PC-3 (cell line): ENCODE measurements at regions of chr13 and their contacts with region 1.

Region 1: GRCh38 chr13:42532561-42533335 is 41.2 kb upstream of the TNFSF11 start:
- DNase-seq: peak; percentile 50
- ATAC-seq: peak; percentile 90
- H3K4me3 ChIP-seq: no peak overlapping the region
- H3K27ac ChIP-seq: peak overlapping the region; percentile 23; the same call in 1 of the 2 replicates
- H3K4me1 ChIP-seq: peaks cover 12% of the 10 kb centered on the region
- H3K27me3 ChIP-seq: no peaks in the 10 kb centered on the region
- CTCF ChIP-seq: no peak

Region 2: DNA sequence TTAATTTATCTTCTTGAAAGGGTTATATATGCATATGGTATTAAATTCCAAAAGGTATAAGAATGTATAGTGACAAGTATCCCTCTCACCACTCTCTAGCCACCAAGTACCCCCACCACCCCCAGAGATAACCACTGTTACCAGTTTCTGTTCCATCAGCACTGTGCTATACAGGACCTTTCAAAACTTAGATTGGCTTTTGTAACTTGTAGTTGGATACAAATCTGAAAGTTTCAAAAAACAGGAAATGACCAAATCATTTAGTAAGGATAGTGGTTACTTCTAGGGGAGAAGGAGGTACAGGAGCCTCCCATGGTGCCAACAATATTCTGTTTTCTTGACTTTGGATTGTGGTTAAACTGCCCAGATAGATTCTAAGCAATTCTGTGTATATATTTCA is 204.1 kb before region 1 on chr13:
- CTCF ChIA-PET with region 1: no interaction called
- POLR2A ChIA-PET with region 1: no interaction called
- intact Hi-C with region 1: no loop called
- DNase-seq: no peak
- ATAC-seq: no peak
- H3K4me3 ChIP-seq: no peak overlapping the region
- H3K27ac ChIP-seq: no peak overlapping the region
- H3K4me1 ChIP-seq: no peaks in the 10 kb centered on the region
- H3K27me3 ChIP-seq: no peaks in the 10 kb centered on the region
- CTCF ChIP-seq: no peak

Region 3: DNA sequence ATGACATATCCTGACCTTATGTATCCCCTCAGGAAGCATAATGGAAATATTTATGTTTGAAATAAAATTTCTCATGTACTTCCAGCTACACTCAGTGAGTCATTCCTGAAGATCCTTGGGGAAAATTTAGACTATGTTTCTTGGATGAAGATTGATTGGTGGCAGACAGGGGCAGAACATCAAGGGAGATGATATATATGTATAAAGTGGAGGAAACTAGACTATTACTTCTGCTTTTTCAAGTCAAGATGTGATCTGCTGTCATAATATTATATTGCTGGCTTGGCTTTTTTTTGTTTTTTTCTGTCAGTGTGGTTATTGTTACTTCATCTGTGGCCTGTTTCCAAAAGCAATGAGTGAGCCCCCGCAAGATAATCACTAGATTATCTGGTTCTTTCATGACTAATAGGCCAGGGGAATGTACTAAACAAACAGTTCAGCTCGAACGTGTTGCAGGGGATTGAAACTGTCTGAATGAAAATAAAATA is 46.0 kb before region 1 on chr13:
- CTCF ChIA-PET with region 1: no interaction called
- POLR2A ChIA-PET with region 1: no interaction called
- intact Hi-C with region 1: loop called (anchors 2 kb)
- DNase-seq: peak; percentile 88
- ATAC-seq: peak; percentile 80
- H3K4me3 ChIP-seq: peak overlapping the region; percentile 39; the same call in 1 of the 2 replicates
- H3K27ac ChIP-seq: peak overlapping the region; percentile 94
- H3K4me1 ChIP-seq: peaks cover 53% of the 10 kb centered on the region
- H3K27me3 ChIP-seq: no peaks in the 10 kb centered on the region
- CTCF ChIP-seq: no peak

Region 4: DNA sequence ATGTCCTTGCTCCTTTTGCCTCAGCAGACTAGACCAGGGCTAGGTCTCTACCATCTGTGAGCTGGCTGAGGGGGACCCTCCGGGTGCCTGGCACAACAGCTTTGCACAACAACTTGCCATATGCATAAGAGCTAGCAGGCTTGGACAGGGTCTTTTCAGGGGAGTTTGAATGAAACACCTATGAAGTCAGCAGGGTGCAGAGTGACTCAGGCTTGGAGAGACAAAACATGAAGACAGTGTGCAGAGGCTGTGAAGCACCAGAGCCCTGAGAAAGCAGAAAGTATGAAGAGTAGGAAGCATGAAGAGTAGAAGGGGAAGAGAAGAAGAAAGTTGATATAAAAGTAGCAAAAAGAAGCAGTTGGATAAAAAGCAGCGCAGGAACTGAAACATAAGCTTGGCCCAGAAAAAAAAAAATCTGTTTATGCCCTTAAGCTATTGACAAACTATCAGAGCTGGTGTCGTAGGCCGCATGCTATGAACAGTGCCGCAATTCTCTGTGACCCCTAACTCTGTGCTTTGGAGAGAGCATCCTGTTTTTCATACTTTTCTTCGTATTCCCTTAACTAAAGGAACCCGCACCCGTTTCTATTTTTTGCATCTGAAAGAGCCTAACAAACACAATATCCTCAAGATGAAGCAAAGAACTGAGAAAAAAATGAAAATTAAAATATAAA is 195.9 kb after region 1 on chr13:
- CTCF ChIA-PET with region 1: no interaction called
- POLR2A ChIA-PET with region 1: no interaction called
- intact Hi-C with region 1: no loop called
- DNase-seq: no peak
- ATAC-seq: no peak
- H3K4me3 ChIP-seq: no peak overlapping the region
- H3K27ac ChIP-seq: no peak overlapping the region
- H3K4me1 ChIP-seq: no peaks in the 10 kb centered on the region
- H3K27me3 ChIP-seq: no peaks in the 10 kb centered on the region
- CTCF ChIP-seq: no peak